GM12878 (cell line): ENCODE measurements at regions of chr2 and their contacts with region 1.

Region 1: GRCh38 chr2:47323009-47323821 is 79.7 kb upstream of the MSH2 start:
- DNase-seq: peak; percentile 66
- ATAC-seq: peak; percentile 97
- H3K4me3 ChIP-seq: no peak overlapping the region
- H3K27ac ChIP-seq: no peak overlapping the region
- H3K4me1 ChIP-seq: peaks cover 5% of the 10 kb centered on the region
- H3K27me3 ChIP-seq: no peaks in the 10 kb centered on the region
- CTCF ChIP-seq: peak; percentile 98 to 99 (median 98); a peak in 5 of 6 replicates
- EP300 ChIP-seq: no peak
- POLR2A ChIP-seq: no peak
- RAD21 ChIP-seq: peak; percentile 100

Region 2: GRCh38 chr2:46657042-46657504 is 666.1 kb before region 1 on chr2:
- CTCF ChIA-PET with region 1: interaction called, 3 read pairs
- POLR2A ChIA-PET with region 1: no interaction called
- RAD21 ChIA-PET with region 1: interaction called, 4 read pairs
- SMC1A ChIA-PET with region 1: interaction called, 5 read pairs
- in situ Hi-C with region 1: loop called (anchors 10 kb)
- intact Hi-C with region 1: loop called (anchors 5 kb)
- DNase-seq: no peak
- ATAC-seq: peak; percentile 94
- H3K4me3 ChIP-seq: no peak overlapping the region
- H3K27ac ChIP-seq: no peak overlapping the region
- H3K4me1 ChIP-seq: no peaks in the 10 kb centered on the region
- H3K27me3 ChIP-seq: no peaks in the 10 kb centered on the region
- CTCF ChIP-seq: peak; percentile 48 to 52 (median 50); a peak in 5 of 6 replicates
- EP300 ChIP-seq: no peak
- POLR2A ChIP-seq: no peak
- RAD21 ChIP-seq: peak; percentile 57

Region 3: GRCh38 chr2:46960618-46961017 is 362.6 kb before region 1 on chr2:
- CTCF ChIA-PET with region 1: interaction called, 13 read pairs
- POLR2A ChIA-PET with region 1: no interaction called
- RAD21 ChIA-PET with region 1: no interaction called
- SMC1A ChIA-PET with region 1: interaction called, 3 read pairs
- in situ Hi-C with region 1: no loop called
- intact Hi-C with region 1: no loop called
- DNase-seq: no peak
- ATAC-seq: peak; percentile 36; the same call in 2 of the 3 replicates
- H3K4me3 ChIP-seq: no peak overlapping the region
- H3K27ac ChIP-seq: no peak overlapping the region
- H3K4me1 ChIP-seq: no peaks in the 10 kb centered on the region
- H3K27me3 ChIP-seq: no peaks in the 10 kb centered on the region
- CTCF ChIP-seq: peak in 2 of 3 experiments; percentile 9 to 14; a peak in 1 of 6 replicates
- EP300 ChIP-seq: no peak
- POLR2A ChIP-seq: no peak
- RAD21 ChIP-seq: peak; percentile 36; the same call in 1 of the 2 replicates

Region 4: GRCh38 chr2:47043142-47043890 is 279.9 kb before region 1 on chr2:
- CTCF ChIA-PET with region 1: interaction called, 12 read pairs
- POLR2A ChIA-PET with region 1: no interaction called
- RAD21 ChIA-PET with region 1: no interaction called
- SMC1A ChIA-PET with region 1: interaction called, 6 read pairs
- in situ Hi-C with region 1: no loop called
- intact Hi-C with region 1: no loop called
- DNase-seq: no peak
- ATAC-seq: no peak
- H3K4me3 ChIP-seq: no peak overlapping the region
- H3K27ac ChIP-seq: no peak overlapping the region
- H3K4me1 ChIP-seq: peaks cover 5% of the 10 kb centered on the region
- H3K27me3 ChIP-seq: no peaks in the 10 kb centered on the region
- CTCF ChIP-seq: no peak
- EP300 ChIP-seq: no peak
- POLR2A ChIP-seq: no peak
- RAD21 ChIP-seq: no peak

Region 5: GRCh38 chr2:47174733-47175361 is 148.4 kb before region 1 on chr2:
- CTCF ChIA-PET with region 1: interaction called, 23 read pairs
- POLR2A ChIA-PET with region 1: interaction called, 12 read pairs
- RAD21 ChIA-PET with region 1: interaction called, 29 read pairs
- SMC1A ChIA-PET with region 1: interaction called, 7 read pairs
- in situ Hi-C with region 1: no loop called
- intact Hi-C with region 1: no loop called
- DNase-seq: no peak
- ATAC-seq: peak; percentile 37
- H3K4me3 ChIP-seq: peak overlapping the region; percentile 98
- H3K27ac ChIP-seq: peak overlapping the region; percentile 100
- H3K4me1 ChIP-seq: peaks cover 7% of the 10 kb centered on the region
- H3K27me3 ChIP-seq: no peaks in the 10 kb centered on the region
- CTCF ChIP-seq: no peak
- EP300 ChIP-seq: no peak
- POLR2A ChIP-seq: no peak
- RAD21 ChIP-seq: no peak

Region 6: GRCh38 chr2:47309952-47310800 is 13.0 kb before region 1 on chr2:
- CTCF ChIA-PET with region 1: interaction called, 120 read pairs
- POLR2A ChIA-PET with region 1: interaction called, 7 read pairs
- RAD21 ChIA-PET with region 1: interaction called, 84 read pairs
- SMC1A ChIA-PET with region 1: interaction called, 60 read pairs
- in situ Hi-C with region 1: no loop called
- intact Hi-C with region 1: no loop called
- DNase-seq: peak; percentile 100
- ATAC-seq: peak; percentile 87
- H3K4me3 ChIP-seq: peak overlapping the region; percentile 31; the same call in 1 of the 2 replicates
- H3K27ac ChIP-seq: peak overlapping the region; percentile 88
- H3K4me1 ChIP-seq: peaks cover 44% of the 10 kb centered on the region
- H3K27me3 ChIP-seq: no peaks in the 10 kb centered on the region
- CTCF ChIP-seq: no peak
- EP300 ChIP-seq: peak; percentile 90 to 97
- POLR2A ChIP-seq: peak; percentile 50; the same call in 1 of the 2 replicates
- RAD21 ChIP-seq: peak; percentile 26; the same call in 1 of the 2 replicates

Region 7: GRCh38 chr2:47767880-47768609 is 444.8 kb after region 1 on chr2:
- CTCF ChIA-PET with region 1: interaction called, 14 read pairs
- POLR2A ChIA-PET with region 1: no interaction called
- RAD21 ChIA-PET with region 1: interaction called, 12 read pairs
- SMC1A ChIA-PET with region 1: interaction called, 7 read pairs
- in situ Hi-C with region 1: no loop called
- intact Hi-C with region 1: no loop called
- DNase-seq: no peak
- ATAC-seq: peak; percentile 96
- H3K4me3 ChIP-seq: no peak overlapping the region
- H3K27ac ChIP-seq: no peak overlapping the region
- H3K4me1 ChIP-seq: no peaks in the 10 kb centered on the region
- H3K27me3 ChIP-seq: no peaks in the 10 kb centered on the region
- CTCF ChIP-seq: peak; percentile 97 to 100 (median 97); a peak in 5 of 6 replicates
- EP300 ChIP-seq: no peak
- POLR2A ChIP-seq: no peak
- RAD21 ChIP-seq: peak; percentile 99